ENCODE measurements at regions of chr3 and their contacts with region 1.

Region 1: DNA sequence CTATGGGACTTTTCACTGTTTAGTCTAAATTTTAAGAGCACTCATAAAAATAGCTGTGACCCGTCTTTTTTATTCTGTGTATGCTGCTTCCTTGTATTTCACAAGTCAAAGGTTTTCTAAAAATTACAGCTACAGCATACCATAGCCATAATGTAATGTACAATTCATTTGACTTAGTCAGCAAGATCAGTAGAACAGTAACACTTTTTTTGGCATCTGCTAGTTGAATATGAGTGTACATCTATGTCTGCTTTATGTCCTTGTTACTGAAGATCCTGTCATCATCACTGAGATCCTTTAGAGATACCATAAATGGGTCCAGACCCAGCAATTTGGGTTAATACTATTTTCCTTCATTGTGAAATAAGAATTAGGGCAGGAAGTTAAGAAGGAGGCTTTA is 42.2 kb downstream of the CMSS1 start:
- DNase-seq: no peak
- ATAC-seq: no peak
- H3K4me3 Mint-ChIP-seq: no peak overlapping the region
- H3K27ac Mint-ChIP-seq: no peak overlapping the region
- H3K4me1 Mint-ChIP-seq: peaks cover 19% of the 10 kb centered on the region
- H3K27me3 Mint-ChIP-seq: no peaks in the 10 kb centered on the region

Region 2: DNA sequence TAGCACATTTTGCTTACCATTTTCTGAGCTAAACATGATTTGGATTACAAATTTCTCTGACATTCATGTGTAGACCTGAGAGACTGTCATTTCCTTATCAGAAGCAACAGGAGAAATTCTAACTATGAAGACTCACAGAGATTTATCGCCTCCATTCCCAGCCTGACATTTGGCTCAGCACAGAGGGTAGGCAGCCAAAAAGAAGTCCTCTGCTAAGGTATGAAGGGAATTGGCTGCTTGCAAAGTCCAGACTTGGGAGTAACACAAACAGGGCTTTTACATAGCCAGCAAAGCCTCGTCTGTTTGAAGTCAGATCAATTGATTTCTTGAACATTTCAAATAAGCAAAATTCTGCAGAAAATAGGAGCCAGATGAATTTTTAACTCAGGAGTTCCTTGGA is 99.2 kb before region 1 on chr3:
- CTCF ChIA-PET with region 1: no interaction called
- POLR2A ChIA-PET with region 1: no interaction called
- intact Hi-C with region 1: no loop called
- DNase-seq: no peak
- ATAC-seq: no peak
- H3K4me3 Mint-ChIP-seq: no peak overlapping the region
- H3K27ac Mint-ChIP-seq: no peak overlapping the region
- H3K4me1 Mint-ChIP-seq: no peaks in the 10 kb centered on the region
- H3K27me3 Mint-ChIP-seq: peaks cover 14% of the 10 kb centered on the region

Region 3: DNA sequence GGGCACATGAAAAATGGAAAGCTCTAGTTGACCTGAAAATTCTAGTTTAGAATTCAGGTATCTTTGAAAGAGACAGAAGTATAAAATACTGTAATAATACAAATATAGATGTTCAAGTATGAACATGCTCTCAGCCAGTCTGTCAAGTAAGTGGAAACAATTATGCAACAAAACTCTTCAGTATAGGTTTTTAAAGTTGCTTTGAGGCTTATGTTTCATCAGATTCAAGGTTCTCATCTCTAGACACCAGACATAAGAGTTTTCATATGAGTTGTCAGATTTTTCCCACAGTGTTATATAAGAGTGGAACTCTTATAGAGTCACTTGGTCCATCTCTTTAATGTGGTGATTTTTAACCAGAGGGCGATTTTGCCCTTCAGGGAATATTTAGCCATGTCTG is 20.2 kb before region 1 on chr3:
- CTCF ChIA-PET with region 1: no interaction called
- POLR2A ChIA-PET with region 1: no interaction called
- intact Hi-C with region 1: no loop called
- DNase-seq: no peak
- ATAC-seq: no peak
- H3K4me3 Mint-ChIP-seq: no peak overlapping the region
- H3K27ac Mint-ChIP-seq: no peak overlapping the region
- H3K4me1 Mint-ChIP-seq: peaks cover 2% of the 10 kb centered on the region
- H3K27me3 Mint-ChIP-seq: no peaks in the 10 kb centered on the region

Region 4: GRCh38 chr3:99875929-99876841 is 16.4 kb after region 1 on chr3:
- CTCF ChIA-PET with region 1: interaction called, 3 read pairs
- POLR2A ChIA-PET with region 1: interaction called, 3 read pairs
- intact Hi-C with region 1: loop called in 1 of 2 experiments (anchors 2 kb)
- DNase-seq: peak; percentile 79
- ATAC-seq: peak; percentile 93
- H3K4me3 Mint-ChIP-seq: peak overlapping the region; percentile 65
- H3K27ac Mint-ChIP-seq: no peak overlapping the region
- H3K4me1 Mint-ChIP-seq: peaks cover 21% of the 10 kb centered on the region
- H3K27me3 Mint-ChIP-seq: peaks cover 4% of the 10 kb centered on the region

Measured in activated CD4-positive, alpha-beta T cell treated with anti-CD3 and anti-CD28 coated beads for 36 hours (primary cell).